Left ventricle myocardium inferior (tissue), 1 donor: ENCODE measurements at regions of chr14 and their contacts with region 1.

Region 1: DNA sequence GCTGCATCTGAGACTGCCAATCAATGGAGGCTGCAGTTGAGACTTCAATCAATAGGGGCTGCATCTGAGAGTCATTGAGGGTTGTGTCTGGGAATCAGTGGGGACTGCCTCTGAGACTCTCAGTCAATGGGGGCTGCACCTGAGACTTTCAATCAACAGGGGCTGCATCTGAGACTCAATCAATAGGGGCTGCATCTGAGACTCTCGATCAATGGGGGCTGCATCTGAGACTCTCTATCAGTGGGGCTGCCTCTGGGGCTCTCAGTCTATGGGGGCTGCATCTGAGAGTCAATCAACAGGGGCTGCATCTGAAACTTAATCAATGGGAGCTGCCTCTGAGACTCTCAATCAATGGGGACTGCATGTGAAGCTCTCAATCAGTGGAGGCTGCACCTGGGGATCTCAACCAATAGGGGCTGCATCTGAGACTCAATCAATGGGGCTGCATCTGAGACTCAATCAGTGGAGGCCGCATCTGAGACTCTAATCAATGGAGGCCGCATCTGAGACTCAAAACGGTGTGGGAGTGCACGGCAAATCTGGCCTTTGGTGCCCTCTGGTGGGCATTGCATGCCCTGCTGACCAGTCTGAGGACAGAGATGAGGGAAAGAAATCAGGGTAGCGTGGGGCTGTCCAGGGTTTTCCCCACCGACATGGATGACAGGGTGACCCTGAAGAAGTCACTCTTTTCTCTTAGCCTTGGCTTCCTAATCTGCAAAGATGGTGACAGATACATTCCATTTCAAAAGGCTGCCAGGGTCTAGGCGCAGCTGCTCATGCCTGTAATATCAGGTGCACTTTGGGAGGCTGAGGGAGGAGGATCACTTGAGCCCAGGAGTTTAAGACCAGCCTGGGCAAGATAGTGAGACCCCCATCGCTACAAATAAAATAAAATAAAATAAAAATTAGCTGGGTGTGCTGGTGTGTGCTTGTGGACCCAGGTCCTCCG is 41.3 kb upstream of the EIF5 start:
- DNase-seq: peak; percentile 72
- H3K4me3 ChIP-seq: no peak overlapping the region
- H3K27ac ChIP-seq: no peak overlapping the region
- H3K4me1 ChIP-seq: no peaks in the 10 kb centered on the region
- H3K27me3 ChIP-seq: peaks cover 73% of the 10 kb centered on the region
- CTCF ChIP-seq: peak; percentile 93

Region 2: GRCh38 chr14:103104654-103105452 is 187.8 kb before region 1 on chr14:
- intact Hi-C with region 1: loop called (anchors 5 kb)
- DNase-seq: peak; percentile 73
- H3K4me3 ChIP-seq: peak overlapping the region; percentile 51
- H3K27ac ChIP-seq: no peak overlapping the region
- H3K4me1 ChIP-seq: peaks cover 35% of the 10 kb centered on the region
- H3K27me3 ChIP-seq: peaks cover 56% of the 10 kb centered on the region
- CTCF ChIP-seq: peak; percentile 94